SK-N-SH (cell line): ENCODE measurements at regions of chr13 and their contacts with region 1.

Region 1: DNA sequence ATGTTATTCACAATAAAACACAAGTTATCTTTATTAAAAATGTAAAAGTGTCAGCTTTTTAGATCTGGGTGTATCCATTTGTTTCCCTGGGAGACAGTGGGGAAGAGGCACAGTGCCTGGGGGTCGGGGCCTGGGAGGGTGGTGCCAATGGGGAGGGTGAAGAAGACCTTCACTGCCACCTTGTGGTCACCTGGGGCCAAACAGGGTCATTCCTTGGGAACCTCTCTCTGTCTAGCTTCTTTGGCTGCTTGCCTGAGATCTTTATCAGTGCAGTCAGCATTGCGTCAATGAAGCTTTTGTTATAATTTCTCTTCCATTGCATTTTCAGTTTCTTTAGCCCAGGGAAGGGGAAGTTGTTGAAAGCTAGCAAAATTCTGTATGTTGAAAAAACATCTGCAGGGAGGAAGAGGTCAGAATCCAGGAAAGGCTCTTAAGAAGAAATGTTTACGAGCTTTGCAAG is 39.1 kb downstream of the PCDH8 start:
- DNase-seq: peak; percentile 93
- H3K4me3 ChIP-seq: no peak overlapping the region; a peak in 1 of 4 replicates
- H3K27ac ChIP-seq: peak overlapping the region in 1 of 2 experiments; percentile 21; a peak in 1 of 4 replicates
- H3K4me1 ChIP-seq: peaks cover 6 to 7% of the 10 kb centered on the region in 2 experiments
- H3K27me3 ChIP-seq: no peaks in the 10 kb centered on the region; the same call in 1 of the 2 replicates
- CTCF ChIP-seq: peak; percentile 78
- EP300 ChIP-seq: peak in 1 of 2 experiments; percentile 59; a peak in 1 of 4 replicates
- RAD21 ChIP-seq: peak; percentile 93

Region 2: GRCh38 chr13:52673465-52673864 is 135.9 kb before region 1 on chr13:
- CTCF ChIA-PET with region 1: interaction called, 24 read pairs
- POLR2A ChIA-PET with region 1: no interaction called
- DNase-seq: no peak
- H3K4me3 ChIP-seq: no peak overlapping the region
- H3K27ac ChIP-seq: no peak overlapping the region
- H3K4me1 ChIP-seq: no peaks in the 10 kb centered on the region; a peak in 1 of 4 replicates
- H3K27me3 ChIP-seq: no peaks in the 10 kb centered on the region
- CTCF ChIP-seq: no peak
- EP300 ChIP-seq: no peak
- RAD21 ChIP-seq: no peak

Region 3: DNA sequence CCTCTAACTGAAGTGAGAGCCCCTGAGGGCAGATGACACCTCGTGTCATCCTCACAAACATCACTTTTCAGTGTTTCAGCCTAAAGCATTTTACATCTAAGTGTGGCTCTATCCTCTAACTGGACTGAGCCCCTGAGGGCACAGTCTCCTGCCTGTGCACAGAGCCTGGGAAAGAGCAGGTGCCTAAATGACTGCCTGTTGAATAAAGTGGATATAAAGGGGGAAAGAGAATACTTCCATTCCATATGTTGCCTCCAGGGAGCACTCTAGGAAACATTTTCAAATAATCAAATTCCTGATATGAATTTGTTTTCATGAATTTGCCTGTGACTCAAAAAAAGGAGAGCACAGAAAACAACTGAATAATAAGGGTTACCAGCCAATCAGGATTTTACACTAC is 102.0 kb before region 1 on chr13:
- CTCF ChIA-PET with region 1: interaction called, 16 read pairs
- POLR2A ChIA-PET with region 1: no interaction called
- DNase-seq: peak; percentile 32
- H3K4me3 ChIP-seq: no peak overlapping the region
- H3K27ac ChIP-seq: no peak overlapping the region
- H3K4me1 ChIP-seq: peaks cover 4 to 5% of the 10 kb centered on the region in 2 experiments; a peak in 2 of 4 replicates
- H3K27me3 ChIP-seq: no peaks in the 10 kb centered on the region
- CTCF ChIP-seq: no peak; the same call in 1 of the 2 replicates
- EP300 ChIP-seq: no peak
- RAD21 ChIP-seq: peak; percentile 56

Region 4: GRCh38 chr13:52743988-52744387 is 65.4 kb before region 1 on chr13:
- CTCF ChIA-PET with region 1: no interaction called
- POLR2A ChIA-PET with region 1: no interaction called
- DNase-seq: no peak
- H3K4me3 ChIP-seq: no peak overlapping the region
- H3K27ac ChIP-seq: no peak overlapping the region
- H3K4me1 ChIP-seq: no peaks in the 10 kb centered on the region
- H3K27me3 ChIP-seq: no peaks in the 10 kb centered on the region
- CTCF ChIP-seq: peak; percentile 25; the same call in 1 of the 2 replicates
- EP300 ChIP-seq: no peak
- RAD21 ChIP-seq: peak; percentile 40; the same call in 1 of the 2 replicates

Region 5: DNA sequence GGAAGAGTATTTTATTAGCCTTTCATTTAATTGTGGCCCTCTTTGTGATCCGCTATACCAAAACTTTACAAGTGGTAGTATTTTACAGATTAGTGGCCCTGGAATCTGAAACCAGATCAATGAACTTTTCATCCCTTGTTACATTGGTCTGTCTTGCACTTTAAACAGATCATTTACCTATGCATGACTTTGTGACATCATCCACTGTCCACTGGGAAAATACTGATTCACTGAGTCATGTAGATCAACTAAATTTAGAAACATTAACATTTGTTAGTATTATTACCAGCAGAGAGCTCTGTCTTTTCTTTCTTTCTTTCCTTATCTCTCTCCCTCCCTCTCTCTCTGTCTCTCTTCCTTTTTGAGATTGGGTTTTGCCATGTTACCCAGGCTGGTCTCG is 21.6 kb after region 1 on chr13:
- CTCF ChIA-PET with region 1: interaction called, 41 read pairs
- POLR2A ChIA-PET with region 1: no interaction called
- DNase-seq: no peak
- H3K4me3 ChIP-seq: no peak overlapping the region
- H3K27ac ChIP-seq: no peak overlapping the region
- H3K4me1 ChIP-seq: peaks cover 6 to 20% of the 10 kb centered on the region in 2 experiments; a peak in 2 of 4 replicates
- H3K27me3 ChIP-seq: no peaks in the 10 kb centered on the region
- CTCF ChIP-seq: no peak
- EP300 ChIP-seq: no peak
- RAD21 ChIP-seq: no peak

Region 6: DNA sequence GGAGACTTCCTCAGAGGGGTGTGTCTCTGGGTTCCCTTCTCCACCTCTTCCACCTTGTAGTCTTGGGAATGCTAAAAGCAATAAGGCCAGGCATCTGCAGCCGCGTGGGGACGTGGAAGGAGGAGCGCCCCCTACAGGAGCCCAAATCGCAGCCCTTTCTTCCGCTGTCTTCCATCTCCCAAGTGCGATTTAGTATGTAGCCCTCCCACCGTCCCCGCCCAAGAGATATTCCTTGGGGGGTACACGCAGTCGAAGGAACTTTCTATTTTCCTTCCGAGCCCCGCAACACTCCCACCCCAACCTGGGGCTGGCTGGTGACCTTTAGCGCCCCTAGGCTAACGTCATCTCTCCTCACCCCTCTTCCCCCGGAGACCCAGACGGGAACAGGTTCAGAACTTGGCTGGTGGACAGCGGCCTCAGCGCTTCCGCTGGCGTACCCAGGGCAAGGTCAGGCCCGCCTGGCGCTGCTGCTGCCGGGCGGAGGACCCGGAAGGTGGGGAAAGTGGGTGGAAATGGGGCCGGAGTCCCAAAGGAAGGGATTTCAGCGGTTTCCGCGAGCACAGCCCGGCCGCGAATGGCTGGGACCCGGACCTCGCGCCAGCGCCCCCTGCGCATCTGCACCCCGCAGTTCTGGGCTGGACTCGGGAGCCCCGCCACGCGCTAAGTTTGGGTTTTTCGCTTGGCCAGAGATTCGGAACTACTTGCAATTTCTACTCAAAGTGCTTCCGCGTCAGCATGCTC is 41.2 kb after region 1 on chr13:
- CTCF ChIA-PET with region 1: interaction called, 19 read pairs
- POLR2A ChIA-PET with region 1: no interaction called
- DNase-seq: peak; percentile 71
- H3K4me3 ChIP-seq: peak overlapping the region; percentile 69 to 97
- H3K27ac ChIP-seq: peak overlapping the region in 1 of 2 experiments; percentile 79; a peak in 2 of 4 replicates
- H3K4me1 ChIP-seq: peaks cover 6 to 34% of the 10 kb centered on the region in 2 experiments; a peak in 3 of 4 replicates
- H3K27me3 ChIP-seq: peaks cover 37% of the 10 kb centered on the region
- CTCF ChIP-seq: peak; percentile 26; the same call in 1 of the 2 replicates
- EP300 ChIP-seq: no peak
- RAD21 ChIP-seq: no peak

Region 7: GRCh38 chr13:53032849-53033248 is 223.5 kb after region 1 on chr13:
- CTCF ChIA-PET with region 1: no interaction called
- POLR2A ChIA-PET with region 1: no interaction called
- DNase-seq: no peak
- H3K4me3 ChIP-seq: no peak overlapping the region
- H3K27ac ChIP-seq: no peak overlapping the region
- H3K4me1 ChIP-seq: no peaks in the 10 kb centered on the region
- H3K27me3 ChIP-seq: no peaks in the 10 kb centered on the region
- CTCF ChIP-seq: no peak
- EP300 ChIP-seq: no peak
- RAD21 ChIP-seq: no peak